HCT116 (cell line): ENCODE measurements at regions of chr19 and their contacts with region 1.

Region 1: GRCh38 chr19:48999481-49000325 is 6.0 kb downstream of the RUVBL2 start:
- DNase-seq: no peak
- ATAC-seq: peak; percentile 75
- H3K4me3 ChIP-seq: no peak overlapping the region
- H3K27ac ChIP-seq: no peak overlapping the region
- H3K4me1 ChIP-seq: peaks cover 9 to 22% of the 10 kb centered on the region in 2 experiments
- H3K27me3 ChIP-seq: no peaks in the 10 kb centered on the region
- CTCF ChIP-seq: peak; percentile 48 to 79 (median 78); a peak in 5 of 6 replicates
- POLR2A ChIP-seq: no peak
- RAD21 ChIP-seq: peak; percentile 58

Region 2: GRCh38 chr19:49009828-49010227 is 10.1 kb after region 1 on chr19:
- CTCF ChIA-PET with region 1: interaction called, 19 read pairs
- POLR2A ChIA-PET with region 1: interaction called, 3 read pairs
- RAD21 ChIA-PET with region 1: no interaction called
- intact Hi-C with region 1: no loop called
- DNase-seq: no peak
- ATAC-seq: no peak
- H3K4me3 ChIP-seq: no peak overlapping the region
- H3K27ac ChIP-seq: no peak overlapping the region
- H3K4me1 ChIP-seq: no peaks in the 10 kb centered on the region
- H3K27me3 ChIP-seq: no peaks in the 10 kb centered on the region
- CTCF ChIP-seq: no peak
- POLR2A ChIP-seq: no peak
- RAD21 ChIP-seq: no peak

Region 3: GRCh38 chr19:49017666-49018351 is 18.1 kb after region 1 on chr19:
- CTCF ChIA-PET with region 1: interaction called, 13 read pairs
- POLR2A ChIA-PET with region 1: interaction called, 3 read pairs
- RAD21 ChIA-PET with region 1: no interaction called
- intact Hi-C with region 1: no loop called
- DNase-seq: peak; percentile 60
- ATAC-seq: peak; percentile 73
- H3K4me3 ChIP-seq: peak overlapping the region; percentile 53 to 60
- H3K27ac ChIP-seq: peak overlapping the region; percentile 95
- H3K4me1 ChIP-seq: peaks cover 31 to 55% of the 10 kb centered on the region in 2 experiments
- H3K27me3 ChIP-seq: no peaks in the 10 kb centered on the region
- CTCF ChIP-seq: peak in 2 of 3 experiments; percentile 47 to 53; a peak in 4 of 6 replicates
- POLR2A ChIP-seq: peak; percentile 36
- RAD21 ChIP-seq: no peak

Region 4: GRCh38 chr19:49085020-49085867 is 85.5 kb after region 1 on chr19 and contains the start of gene SNRNP70:
- CTCF ChIA-PET with region 1: no interaction called
- POLR2A ChIA-PET with region 1: no interaction called
- RAD21 ChIA-PET with region 1: no interaction called
- intact Hi-C with region 1: no loop called
- DNase-seq: peak; percentile 98
- ATAC-seq: peak; percentile 96
- H3K4me3 ChIP-seq: peak within 1 kb of the TSS; percentile 86
- H3K27ac ChIP-seq: peak within 1 kb of the TSS; percentile 94
- H3K4me1 ChIP-seq: peaks cover 6 to 25% of the 10 kb centered on the region in 2 experiments
- H3K27me3 ChIP-seq: no peaks in the 10 kb centered on the region
- CTCF ChIP-seq: no peak
- POLR2A ChIP-seq: peak; percentile 46
- RAD21 ChIP-seq: no peak
- total RNA-seq, gene SNRNP70: 236 TPM

Region 5: DNA sequence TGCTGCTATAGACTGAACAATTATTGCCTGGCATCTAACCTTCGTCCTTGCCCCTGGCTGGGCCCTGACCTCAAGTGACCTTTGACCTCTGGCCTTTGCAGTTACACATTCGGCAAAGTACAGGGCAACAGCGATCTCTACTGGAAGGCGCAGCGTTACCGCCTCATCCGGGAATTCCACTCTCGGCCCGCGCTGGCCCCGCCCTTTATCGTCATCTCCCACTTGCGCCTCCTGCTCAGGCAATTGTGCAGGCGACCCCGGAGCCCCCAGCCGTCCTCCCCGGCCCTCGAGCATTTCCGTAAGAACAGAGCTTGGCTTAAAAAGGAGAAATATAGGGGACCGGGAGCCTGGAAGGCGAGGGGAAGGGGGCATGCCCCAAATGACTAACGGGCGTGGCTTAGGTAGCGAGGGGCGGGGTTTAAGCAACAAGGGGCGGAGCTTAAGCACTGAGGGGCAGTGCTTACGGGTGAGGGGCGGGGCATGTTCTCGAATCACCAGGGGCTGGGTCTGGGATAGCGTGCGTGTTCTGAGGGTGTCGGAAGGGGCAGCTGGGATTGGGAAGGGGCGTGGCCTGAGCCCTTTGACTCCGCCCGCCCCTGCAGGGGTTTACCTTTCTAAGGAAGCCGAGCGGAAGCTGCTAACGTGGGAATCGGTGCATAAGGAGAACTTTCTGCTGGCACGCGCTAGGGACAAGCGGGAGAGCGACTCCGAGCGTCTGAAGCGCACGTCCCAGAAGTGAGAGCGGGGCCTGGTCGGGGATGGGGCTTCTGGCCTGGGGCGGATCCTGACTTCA is 210.6 kb after region 1 on chr19:
- CTCF ChIA-PET with region 1: interaction called, 4 read pairs
- POLR2A ChIA-PET with region 1: no interaction called
- RAD21 ChIA-PET with region 1: no interaction called
- intact Hi-C with region 1: loop called (anchors 2 kb)
- DNase-seq: no peak
- ATAC-seq: peak; percentile 71
- H3K4me3 ChIP-seq: no peak overlapping the region
- H3K27ac ChIP-seq: no peak overlapping the region
- H3K4me1 ChIP-seq: peaks cover 10 to 13% of the 10 kb centered on the region in 2 experiments
- H3K27me3 ChIP-seq: no peaks in the 10 kb centered on the region
- CTCF ChIP-seq: no peak
- POLR2A ChIP-seq: no peak
- RAD21 ChIP-seq: no peak

Region 6: GRCh38 chr19:49224856-49225255 is 225.2 kb after region 1 on chr19:
- CTCF ChIA-PET with region 1: no interaction called
- POLR2A ChIA-PET with region 1: no interaction called
- RAD21 ChIA-PET with region 1: no interaction called
- intact Hi-C with region 1: loop called (anchors 5 kb)
- DNase-seq: peak; percentile 61
- ATAC-seq: peak; percentile 87
- H3K4me3 ChIP-seq: no peak overlapping the region
- H3K27ac ChIP-seq: no peak overlapping the region
- H3K4me1 ChIP-seq: peaks cover 7 to 20% of the 10 kb centered on the region in 2 experiments; a peak in 3 of 4 replicates
- H3K27me3 ChIP-seq: no peaks in the 10 kb centered on the region
- CTCF ChIP-seq: peak; percentile 61 to 82 (median 67)
- POLR2A ChIP-seq: no peak
- RAD21 ChIP-seq: peak; percentile 93

Region 7: DNA sequence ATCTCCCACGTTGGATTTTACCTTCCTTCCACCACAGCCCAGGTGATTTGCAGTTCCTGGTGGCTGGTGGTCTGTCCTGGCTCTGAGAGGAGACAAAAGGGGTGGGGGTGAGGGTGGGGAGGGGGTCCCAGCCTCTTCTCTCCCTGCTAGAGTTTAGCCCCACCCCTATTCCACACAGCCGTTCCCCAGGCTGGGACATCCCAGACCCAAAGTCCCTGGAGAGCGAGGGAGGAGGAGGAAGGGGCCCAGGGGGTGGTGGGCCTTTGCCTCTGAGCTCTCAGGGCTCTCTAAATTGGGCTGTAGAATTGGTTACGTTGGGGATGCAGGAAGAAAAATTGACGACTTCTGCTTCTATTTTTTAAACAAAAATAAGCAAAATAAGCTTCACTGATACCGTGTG is 243.4 kb after region 1 on chr19:
- CTCF ChIA-PET with region 1: no interaction called
- POLR2A ChIA-PET with region 1: no interaction called
- RAD21 ChIA-PET with region 1: no interaction called
- intact Hi-C with region 1: no loop called
- DNase-seq: no peak
- ATAC-seq: no peak
- H3K4me3 ChIP-seq: no peak overlapping the region
- H3K27ac ChIP-seq: no peak overlapping the region
- H3K4me1 ChIP-seq: no peaks in the 10 kb centered on the region
- H3K27me3 ChIP-seq: no peaks in the 10 kb centered on the region
- CTCF ChIP-seq: no peak
- POLR2A ChIP-seq: no peak
- RAD21 ChIP-seq: no peak